GM12878 (cell line): ENCODE measurements at regions of chrX and their contacts with region 1.

Region 1: GRCh38 chrX:29090811-29091210 is 503.6 kb downstream of the IL1RAPL1 start:
- DNase-seq: no peak
- ATAC-seq: no peak
- H3K4me3 ChIP-seq: no peak overlapping the region
- H3K27ac ChIP-seq: no peak overlapping the region
- H3K4me1 ChIP-seq: no peaks in the 10 kb centered on the region
- H3K27me3 ChIP-seq: no peaks in the 10 kb centered on the region
- CTCF ChIP-seq: peak in 2 of 3 experiments; percentile 15 to 22; a peak in 1 of 6 replicates
- EP300 ChIP-seq: no peak
- POLR2A ChIP-seq: no peak
- RAD21 ChIP-seq: peak; percentile 42; the same call in 1 of the 2 replicates

Region 2: DNA sequence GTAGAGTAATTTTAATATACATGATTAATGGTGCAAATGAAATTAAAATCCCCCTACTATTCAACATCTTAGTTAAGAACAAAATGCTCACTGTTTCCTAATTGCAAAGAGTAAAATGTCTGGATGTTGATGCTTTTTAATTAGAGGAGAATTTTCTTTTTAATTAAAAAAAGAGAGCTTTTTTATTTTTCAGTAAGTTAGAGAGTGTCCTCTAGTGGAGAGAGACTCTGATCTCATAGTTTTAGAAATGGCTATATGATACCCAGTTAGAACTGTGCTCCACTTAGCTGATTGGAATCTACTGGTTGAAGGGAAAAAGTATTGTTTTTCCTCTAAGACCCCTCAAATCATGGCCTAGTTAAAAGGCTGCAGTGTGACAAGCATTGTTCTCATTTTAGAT is 812.5 kb after region 1 on chrX:
- CTCF ChIA-PET with region 1: no interaction called
- POLR2A ChIA-PET with region 1: no interaction called
- RAD21 ChIA-PET with region 1: no interaction called
- SMC1A ChIA-PET with region 1: no interaction called
- in situ Hi-C with region 1: no loop called
- intact Hi-C with region 1: loop called (anchors 10 kb)
- DNase-seq: no peak
- ATAC-seq: no peak
- H3K4me3 ChIP-seq: no peak overlapping the region
- H3K27ac ChIP-seq: no peak overlapping the region
- H3K4me1 ChIP-seq: no peaks in the 10 kb centered on the region
- H3K27me3 ChIP-seq: no peaks in the 10 kb centered on the region
- CTCF ChIP-seq: peak; percentile 20 to 40 (median 24); a peak in 2 of 6 replicates
- EP300 ChIP-seq: no peak
- POLR2A ChIP-seq: no peak
- RAD21 ChIP-seq: no peak; the same call in 1 of the 2 replicates